K562 (cell line): ENCODE measurements at regions of chrX and their contacts with region 1.

Region 1: DNA sequence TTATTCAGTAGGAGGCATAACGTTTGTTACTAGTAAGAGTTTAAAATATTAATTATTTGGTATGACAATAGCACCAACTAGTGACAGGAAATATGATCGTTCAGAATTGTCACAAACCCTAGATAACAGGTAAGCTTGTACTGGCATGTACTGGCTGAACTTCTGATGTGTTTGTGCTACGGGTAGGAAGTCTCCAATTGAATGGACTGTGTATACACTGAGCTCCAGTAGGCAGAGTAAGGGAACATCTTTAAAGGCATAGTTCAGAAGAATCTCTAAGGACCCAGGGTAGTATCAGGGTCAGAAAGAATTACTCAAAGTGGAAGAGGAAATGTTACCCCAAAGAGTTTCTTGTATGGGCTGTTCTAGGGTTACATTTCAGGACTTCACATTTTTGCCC is 230.4 kb downstream of the EDA2R start:
- DNase-seq: peak; percentile 3 to 15 (median 4)
- ATAC-seq: peak; percentile 71
- H3K4me3 ChIP-seq: no peak overlapping the region
- H3K27ac ChIP-seq: no peak overlapping the region
- H3K4me1 ChIP-seq: no peaks in the 10 kb centered on the region
- H3K27me3 ChIP-seq: no peaks in the 10 kb centered on the region; a peak in 1 of 5 replicates
- CTCF ChIP-seq: peak in 2 of 3 experiments; percentile 13 to 56; a peak in 2 of 6 replicates
- EP300 ChIP-seq: no peak
- POLR2A ChIP-seq: no peak
- RAD21 ChIP-seq: peak in 1 of 2 experiments; percentile 54; a peak in 3 of 4 replicates

Region 2: DNA sequence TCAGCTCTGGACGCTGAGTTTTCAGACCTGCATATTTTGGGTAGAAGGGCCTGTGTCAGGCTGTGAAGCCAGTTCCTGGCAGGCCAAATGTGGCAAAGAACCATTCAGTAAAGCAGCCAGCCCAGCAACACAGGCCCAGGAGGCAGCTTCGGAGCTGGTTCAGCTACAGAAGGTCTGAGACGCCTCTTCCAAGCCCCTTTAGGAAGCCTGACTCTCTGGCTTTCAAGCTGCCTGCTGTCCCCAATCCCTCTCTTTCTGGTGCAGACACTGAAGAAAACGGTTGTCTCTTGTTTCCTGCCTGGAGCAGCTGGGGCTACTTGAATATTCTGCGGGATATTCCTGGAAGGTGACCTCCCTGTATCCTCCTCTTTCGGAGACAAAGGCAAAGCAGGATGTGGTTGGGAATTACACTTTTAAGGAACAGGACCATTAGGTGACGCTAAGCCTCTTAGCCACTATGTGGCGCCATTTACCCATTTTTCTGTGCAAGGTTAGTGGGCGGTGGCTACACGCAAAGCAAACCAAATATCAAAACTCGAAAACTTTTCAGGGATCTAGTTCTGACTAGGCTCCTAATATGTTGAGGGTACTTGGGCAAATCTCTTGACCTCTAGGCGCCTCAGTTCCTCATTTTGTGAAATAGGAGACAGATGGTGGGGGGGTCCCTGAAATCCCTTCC is 826.7 kb before region 1 on chrX:
- CTCF ChIA-PET with region 1: no interaction called
- POLR2A ChIA-PET with region 1: no interaction called
- in situ Hi-C with region 1: loop called (anchors 25 kb)
- intact Hi-C with region 1: loop called (anchors 1 kb)
- DNase-seq: peak; percentile 53 to 80 (median 60)
- ATAC-seq: peak; percentile 93
- H3K4me3 ChIP-seq: no peak overlapping the region
- H3K27ac ChIP-seq: peak overlapping the region; percentile 62; the same call in 2 of the 3 replicates
- H3K4me1 ChIP-seq: peaks cover 4 to 12% of the 10 kb centered on the region in 2 experiments; a peak in 4 of 5 replicates
- H3K27me3 ChIP-seq: no peaks in the 10 kb centered on the region
- CTCF ChIP-seq: peak; percentile 74 to 90 (median 77)
- EP300 ChIP-seq: no peak
- POLR2A ChIP-seq: no peak
- RAD21 ChIP-seq: peak; percentile 86 to 89

Region 3: GRCh38 chrX:66200855-66201795 is 207.4 kb before region 1 on chrX:
- CTCF ChIA-PET with region 1: no interaction called
- POLR2A ChIA-PET with region 1: no interaction called
- in situ Hi-C with region 1: no loop called
- intact Hi-C with region 1: loop called (anchors 10 kb)
- DNase-seq: no peak
- ATAC-seq: peak; percentile 47; the same call in 1 of the 3 replicates
- H3K4me3 ChIP-seq: no peak overlapping the region
- H3K27ac ChIP-seq: no peak overlapping the region
- H3K4me1 ChIP-seq: no peaks in the 10 kb centered on the region
- H3K27me3 ChIP-seq: no peaks in the 10 kb centered on the region
- CTCF ChIP-seq: peak in 1 of 3 experiments; percentile 42; a peak in 2 of 6 replicates
- EP300 ChIP-seq: no peak
- POLR2A ChIP-seq: no peak
- RAD21 ChIP-seq: peak; percentile 20 to 28; a peak in 3 of 4 replicates